ENCODE measurements at regions of chr1 and their contacts with region 1.

Region 1: DNA sequence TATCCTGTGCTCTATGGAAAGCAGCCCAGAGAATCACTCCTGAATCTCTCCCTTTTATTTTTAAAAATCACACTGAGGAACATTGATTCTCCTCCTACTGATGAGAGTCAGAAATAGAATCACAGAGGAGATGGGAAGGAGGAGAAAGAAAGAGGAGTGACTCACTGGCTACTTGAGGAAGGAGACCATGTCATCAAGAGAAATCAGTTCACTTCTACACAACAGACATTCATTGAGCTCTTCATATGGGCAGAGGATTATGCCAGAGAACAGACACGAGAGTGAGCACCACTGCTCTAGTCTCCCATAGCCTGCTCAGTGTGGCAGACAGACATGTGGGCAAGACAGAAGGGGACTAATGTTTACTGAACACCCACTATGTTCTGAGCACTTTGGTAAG is 44.2 kb downstream of the RAB3B start:
- DNase-seq: peak; percentile 78
- ATAC-seq: peak; percentile 77
- H3K4me3 ChIP-seq: no peak overlapping the region
- H3K27ac ChIP-seq: peak overlapping the region; percentile 50
- H3K4me1 ChIP-seq: peaks cover 17% of the 10 kb centered on the region
- H3K27me3 ChIP-seq: no peaks in the 10 kb centered on the region
- CTCF ChIP-seq: no peak
- POLR2A ChIP-seq: no peak
- RAD21 ChIP-seq: no peak

Region 2: DNA sequence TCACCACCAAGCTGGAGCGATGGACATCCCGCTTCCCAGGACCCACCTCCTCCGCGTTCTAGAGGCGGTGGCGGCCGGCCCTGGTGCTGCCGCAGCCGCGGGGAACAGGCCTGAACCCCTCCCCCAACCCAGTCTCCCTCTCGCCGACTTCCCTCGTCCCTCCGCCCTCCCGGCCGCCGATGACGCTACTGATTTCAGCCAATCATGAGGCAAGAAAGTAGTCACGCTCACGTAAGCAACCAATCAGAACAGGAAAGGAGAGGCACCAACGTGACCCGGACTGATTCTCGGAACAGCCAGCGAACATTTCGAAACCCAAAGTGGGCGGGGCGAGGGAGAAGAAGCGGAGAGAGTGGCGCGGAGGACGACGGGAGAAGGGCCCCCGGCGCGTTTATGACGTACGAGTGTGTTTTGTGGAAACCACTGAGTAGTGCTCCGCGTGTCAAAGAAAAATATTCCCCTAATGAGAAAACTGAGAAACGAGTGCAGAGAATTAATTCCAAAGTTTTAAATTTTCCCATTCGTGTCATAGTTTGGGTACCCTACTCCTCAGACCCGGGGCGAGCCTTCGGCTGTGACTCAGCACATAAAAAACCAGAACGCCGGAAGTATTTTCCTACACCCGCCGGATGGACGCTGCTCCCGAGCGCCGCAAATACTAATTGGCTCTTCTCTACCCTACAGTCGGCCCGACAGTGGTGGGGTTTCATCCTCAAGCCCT is 67.5 kb before region 1 on chr1 and contains the start of gene NRDC:
- CTCF ChIA-PET with region 1: no interaction called
- POLR2A ChIA-PET with region 1: no interaction called
- dilution Hi-C with region 1: loop called (anchors 10 kb)
- in situ Hi-C with region 1: no loop called
- intact Hi-C with region 1: no loop called
- DNase-seq: peak; percentile 100
- ATAC-seq: peak; percentile 92
- H3K4me3 ChIP-seq: peak within 1 kb of the TSS; percentile 83
- H3K27ac ChIP-seq: peak within 1 kb of the TSS; percentile 95
- H3K4me1 ChIP-seq: peaks cover 3% of the 10 kb centered on the region; the same call in 1 of the 2 replicates
- H3K27me3 ChIP-seq: no peaks in the 10 kb centered on the region
- CTCF ChIP-seq: no peak
- POLR2A ChIP-seq: peak; percentile 88
- RAD21 ChIP-seq: peak; percentile 10; the same call in 1 of the 2 replicates
- total RNA-seq, gene NRDC: 75.8 and 78.0 TPM in 2 replicates

Region 3: DNA sequence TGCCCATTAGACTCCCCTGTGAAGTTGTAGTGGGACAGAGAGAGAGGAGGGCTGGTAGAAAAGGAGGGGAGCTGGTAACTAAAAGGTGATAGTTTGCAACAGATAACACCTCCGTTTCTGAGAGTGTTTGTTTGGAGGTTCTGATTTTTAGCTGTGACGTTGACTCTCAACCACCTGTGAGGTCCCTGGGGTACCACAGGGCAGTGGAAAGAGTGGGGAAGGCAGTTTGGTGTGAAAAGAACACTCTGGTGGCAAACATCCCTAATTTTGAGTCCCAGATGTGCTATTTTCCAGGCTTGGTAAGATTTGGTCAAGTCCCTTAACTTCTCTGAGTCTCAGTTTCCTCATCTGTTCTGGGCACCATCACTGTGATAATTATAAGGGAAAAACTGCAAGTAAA is 14.9 kb after region 1 on chr1:
- CTCF ChIA-PET with region 1: no interaction called
- POLR2A ChIA-PET with region 1: no interaction called
- dilution Hi-C with region 1: no loop called
- in situ Hi-C with region 1: no loop called
- intact Hi-C with region 1: no loop called
- DNase-seq: no peak
- ATAC-seq: no peak
- H3K4me3 ChIP-seq: no peak overlapping the region
- H3K27ac ChIP-seq: no peak overlapping the region
- H3K4me1 ChIP-seq: peaks cover 15% of the 10 kb centered on the region
- H3K27me3 ChIP-seq: no peaks in the 10 kb centered on the region
- CTCF ChIP-seq: no peak
- POLR2A ChIP-seq: no peak
- RAD21 ChIP-seq: no peak

Region 4: GRCh38 chr1:52263153-52263910 is 317.0 kb after region 1 on chr1:
- CTCF ChIA-PET with region 1: no interaction called
- POLR2A ChIA-PET with region 1: no interaction called
- dilution Hi-C with region 1: no loop called
- in situ Hi-C with region 1: no loop called
- intact Hi-C with region 1: no loop called
- DNase-seq: peak; percentile 14
- ATAC-seq: peak; percentile 73
- H3K4me3 ChIP-seq: no peak overlapping the region
- H3K27ac ChIP-seq: no peak overlapping the region
- H3K4me1 ChIP-seq: peaks cover 6% of the 10 kb centered on the region
- H3K27me3 ChIP-seq: no peaks in the 10 kb centered on the region
- CTCF ChIP-seq: no peak
- POLR2A ChIP-seq: no peak
- RAD21 ChIP-seq: no peak

Measured in IMR-90 (cell line).